ENCODE measurements at regions of chr10 and their contacts with region 1.

Region 1: GRCh38 chr10:62038609-62039190 is 137.2 kb downstream of the ARID5B start:
- DNase-seq: peak; percentile 50 to 84 (median 74)
- ATAC-seq: peak; percentile 68 to 83 (median 71)
- H3K4me3 ChIP-seq: peak overlapping the region in 1 of 2 donors; percentile 15
- H3K4me3 Mint-ChIP-seq: peak overlapping the region; percentile 54 to 62 (median 58)
- H3K27ac ChIP-seq: peak overlapping the region; percentile 45
- H3K27ac Mint-ChIP-seq: peak overlapping the region; percentile 89 to 91
- H3K4me1 ChIP-seq: peaks cover 37 to 45% of the 10 kb centered on the region in 2 experiments
- H3K4me1 Mint-ChIP-seq: peaks cover 80 to 85% (median 85%) of the 10 kb centered on the region in 3 donors
- H3K27me3 ChIP-seq: no peaks in the 10 kb centered on the region
- H3K27me3 Mint-ChIP-seq: no peaks in the 10 kb centered on the region

Region 2: DNA sequence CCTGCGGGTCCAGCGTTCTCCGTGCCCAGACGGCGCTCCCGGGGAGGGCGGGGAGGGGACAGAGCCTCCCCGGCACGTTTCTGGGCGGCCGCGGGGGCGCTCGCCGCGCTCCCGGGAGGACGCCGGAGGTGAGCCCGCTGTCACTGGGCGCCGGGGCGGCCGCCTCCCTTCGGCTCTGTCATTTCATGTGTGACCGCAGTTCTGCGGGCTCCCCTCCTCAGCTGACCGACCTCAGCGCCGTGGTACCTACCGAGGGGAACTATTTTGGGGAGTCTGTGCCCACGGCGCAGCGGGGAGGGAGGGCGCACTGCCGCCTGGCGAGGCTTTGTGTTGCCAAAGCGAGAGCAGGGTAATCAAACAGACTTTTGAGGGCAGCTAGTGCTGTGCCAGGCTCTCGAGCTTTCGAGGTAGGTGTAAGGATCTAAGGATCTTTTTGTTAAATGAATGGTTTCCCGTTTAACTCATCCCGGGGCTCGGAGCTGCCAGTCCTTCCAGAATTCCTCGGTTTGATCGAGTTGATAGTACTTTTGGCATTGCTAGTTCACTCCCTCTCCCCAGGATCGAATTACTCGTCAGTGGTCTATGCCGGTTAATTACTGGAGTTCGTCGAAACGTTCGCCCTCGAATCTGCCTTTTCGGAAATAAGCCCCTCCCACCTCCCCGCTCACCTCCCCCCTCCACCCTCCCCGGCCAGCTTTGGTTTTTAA is 135.3 kb before region 1 on chr10:
- CTCF ChIA-PET with region 1: interaction called, 6 to 21 read pairs
- POLR2A ChIA-PET with region 1: interaction called, 3 to 8 read pairs
- DNase-seq: peak; percentile 41 to 77 (median 61)
- ATAC-seq: peak; percentile 54 to 59 (median 58)
- H3K4me3 ChIP-seq: peak overlapping the region; percentile 92 to 99
- H3K4me3 Mint-ChIP-seq: peak overlapping the region; percentile 80 to 94 (median 87)
- H3K27ac ChIP-seq: peak overlapping the region; percentile 97
- H3K27ac Mint-ChIP-seq: peak overlapping the region; percentile 94 to 95
- H3K4me1 ChIP-seq: peaks cover 10 to 24% of the 10 kb centered on the region in 2 experiments
- H3K4me1 Mint-ChIP-seq: peaks cover 44 to 52% (median 46%) of the 10 kb centered on the region in 3 donors
- H3K27me3 ChIP-seq: no peaks in the 10 kb centered on the region
- H3K27me3 Mint-ChIP-seq: no peaks in the 10 kb centered on the region

Region 3: DNA sequence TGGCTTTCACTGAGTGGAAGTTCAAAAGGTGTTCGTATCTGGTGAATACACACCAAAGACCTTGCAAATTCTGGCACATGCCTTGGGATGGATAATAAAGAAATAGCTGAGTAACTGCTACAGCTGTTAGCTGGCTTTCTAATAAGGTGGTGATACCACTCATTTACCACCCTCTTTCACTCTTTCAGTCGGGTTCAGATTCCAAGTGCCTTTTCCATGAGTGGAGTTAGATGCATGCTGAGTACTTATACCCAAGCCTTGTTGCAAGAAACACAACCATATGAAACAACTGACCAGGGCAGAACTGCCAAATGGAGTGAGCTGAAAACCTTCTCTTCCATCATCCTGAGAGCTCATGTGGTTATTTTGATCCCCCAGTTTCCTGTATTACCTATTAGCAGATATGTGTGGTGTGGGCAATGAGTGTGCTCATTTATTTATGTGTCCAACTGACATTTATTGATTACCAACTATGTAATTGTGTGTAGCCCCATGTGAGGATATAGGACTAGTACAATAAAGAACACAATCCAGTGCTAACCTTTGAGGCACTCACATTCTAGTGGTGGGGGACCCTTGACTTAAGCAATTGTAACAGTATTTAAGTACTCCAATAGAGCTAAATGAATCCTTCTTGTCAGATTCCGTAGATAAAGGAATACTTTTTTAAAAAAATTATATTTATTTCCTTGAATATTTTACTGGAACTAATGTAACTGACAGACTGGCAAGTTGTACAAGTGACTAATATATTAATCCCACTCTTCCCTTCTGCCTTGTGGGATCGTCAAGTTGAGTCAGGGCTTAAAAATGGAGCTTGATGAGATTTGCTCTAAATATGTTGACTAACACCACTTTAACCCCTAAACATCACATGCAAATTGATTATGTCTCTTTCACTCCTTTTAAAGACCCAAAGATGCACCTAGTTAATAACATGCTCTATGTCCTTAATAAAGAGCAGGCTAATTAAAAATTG is 12.5 kb before region 1 on chr10:
- CTCF ChIA-PET with region 1: interaction called in 1 of 2 experiments, 12 read pairs
- POLR2A ChIA-PET with region 1: interaction called, 3 to 10 read pairs
- DNase-seq: no peak
- ATAC-seq: no peak
- H3K4me3 ChIP-seq: no peak overlapping the region
- H3K4me3 Mint-ChIP-seq: no peak overlapping the region
- H3K27ac ChIP-seq: no peak overlapping the region
- H3K27ac Mint-ChIP-seq: peak overlapping the region in 1 of 2 donors; percentile 17
- H3K4me1 ChIP-seq: peaks cover under 1 to 7% of the 10 kb centered on the region in 2 experiments
- H3K4me1 Mint-ChIP-seq: peaks cover 46 to 89% (median 86%) of the 10 kb centered on the region in 3 donors
- H3K27me3 ChIP-seq: no peaks in the 10 kb centered on the region
- H3K27me3 Mint-ChIP-seq: no peaks in the 10 kb centered on the region

Region 4: GRCh38 chr10:62057359-62057758 is 18.7 kb after region 1 on chr10:
- CTCF ChIA-PET with region 1: interaction called, 7 to 17 read pairs
- POLR2A ChIA-PET with region 1: interaction called, 4 to 7 read pairs
- DNase-seq: no peak
- ATAC-seq: no peak
- H3K4me3 ChIP-seq: no peak overlapping the region
- H3K4me3 Mint-ChIP-seq: peak overlapping the region in 1 of 3 donors; percentile 40
- H3K27ac ChIP-seq: no peak overlapping the region
- H3K27ac Mint-ChIP-seq: peak overlapping the region in 1 of 2 donors; percentile 74
- H3K4me1 ChIP-seq: peaks cover 0 to 22% of the 10 kb centered on the region in 2 experiments
- H3K4me1 Mint-ChIP-seq: peaks cover 89 to 97% (median 95%) of the 10 kb centered on the region in 3 donors
- H3K27me3 ChIP-seq: no peaks in the 10 kb centered on the region
- H3K27me3 Mint-ChIP-seq: no peaks in the 10 kb centered on the region

Region 5: DNA sequence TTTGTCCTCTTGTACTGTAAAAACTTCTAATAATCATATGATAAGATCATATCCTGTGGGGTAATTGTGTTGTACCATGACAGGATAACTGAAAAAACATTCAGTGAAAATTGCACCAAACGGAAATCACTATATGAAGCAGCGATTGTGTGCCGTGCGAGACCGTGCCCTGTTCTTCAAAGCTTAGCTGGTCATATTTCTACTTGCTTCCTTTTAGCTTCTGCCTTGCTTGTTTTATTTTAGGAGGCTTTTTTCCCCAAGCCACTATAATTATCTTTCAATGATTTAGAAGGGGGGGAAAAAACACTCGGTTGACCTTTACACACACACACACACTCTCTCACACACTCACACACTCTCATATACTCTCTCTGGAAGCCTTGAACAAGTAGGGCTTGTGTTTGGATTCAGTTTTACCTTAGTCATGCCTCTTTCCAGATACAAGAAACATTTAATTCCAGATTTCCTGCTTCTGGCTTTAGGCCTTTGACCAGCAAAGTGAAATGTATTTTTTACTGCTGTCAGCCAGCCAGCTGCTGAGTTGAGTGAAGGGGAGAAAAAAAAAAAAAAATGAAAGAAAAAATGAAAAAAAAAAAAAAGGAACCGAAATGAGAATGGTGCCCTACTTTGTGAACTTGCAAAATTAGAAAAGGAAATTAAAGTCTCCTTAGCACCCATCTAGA is 44.2 kb after region 1 on chr10:
- CTCF ChIA-PET with region 1: interaction called in 1 of 2 experiments, 13 read pairs
- POLR2A ChIA-PET with region 1: interaction called, 3 to 6 read pairs
- DNase-seq: peak in 32 of 35 experiments; percentile 11 to 71 (median 33)
- ATAC-seq: peak; percentile 84 to 93 (median 89)
- H3K4me3 ChIP-seq: peak overlapping the region; percentile 3 to 35
- H3K4me3 Mint-ChIP-seq: peak overlapping the region; percentile 32 to 60 (median 58)
- H3K27ac ChIP-seq: peak overlapping the region; percentile 65
- H3K27ac Mint-ChIP-seq: peak overlapping the region; percentile 63 to 91
- H3K4me1 ChIP-seq: peaks cover 22 to 25% of the 10 kb centered on the region in 2 experiments
- H3K4me1 Mint-ChIP-seq: peaks cover 56 to 73% (median 71%) of the 10 kb centered on the region in 3 donors
- H3K27me3 ChIP-seq: no peaks in the 10 kb centered on the region
- H3K27me3 Mint-ChIP-seq: no peaks in the 10 kb centered on the region

Region 6: GRCh38 chr10:62244780-62245467 is 206.2 kb after region 1 on chr10:
- CTCF ChIA-PET with region 1: interaction called, 56 to 200 read pairs
- POLR2A ChIA-PET with region 1: interaction called, 5 to 8 read pairs
- DNase-seq: peak in 31 of 35 experiments; percentile 2 to 82 (median 37)
- ATAC-seq: peak; percentile 76 to 89 (median 81)
- H3K4me3 ChIP-seq: no peak overlapping the region
- H3K4me3 Mint-ChIP-seq: no peak overlapping the region
- H3K27ac ChIP-seq: no peak overlapping the region
- H3K27ac Mint-ChIP-seq: no peak overlapping the region
- H3K4me1 ChIP-seq: peaks cover 3 to 20% of the 10 kb centered on the region in 2 experiments
- H3K4me1 Mint-ChIP-seq: peaks cover 27 to 33% (median 32%) of the 10 kb centered on the region in 3 donors
- H3K27me3 ChIP-seq: no peaks in the 10 kb centered on the region
- H3K27me3 Mint-ChIP-seq: no peaks in the 10 kb centered on the region